AG04449 (cell line): ENCODE measurements at regions of chr11 and their contacts with region 1.

Region 1: DNA sequence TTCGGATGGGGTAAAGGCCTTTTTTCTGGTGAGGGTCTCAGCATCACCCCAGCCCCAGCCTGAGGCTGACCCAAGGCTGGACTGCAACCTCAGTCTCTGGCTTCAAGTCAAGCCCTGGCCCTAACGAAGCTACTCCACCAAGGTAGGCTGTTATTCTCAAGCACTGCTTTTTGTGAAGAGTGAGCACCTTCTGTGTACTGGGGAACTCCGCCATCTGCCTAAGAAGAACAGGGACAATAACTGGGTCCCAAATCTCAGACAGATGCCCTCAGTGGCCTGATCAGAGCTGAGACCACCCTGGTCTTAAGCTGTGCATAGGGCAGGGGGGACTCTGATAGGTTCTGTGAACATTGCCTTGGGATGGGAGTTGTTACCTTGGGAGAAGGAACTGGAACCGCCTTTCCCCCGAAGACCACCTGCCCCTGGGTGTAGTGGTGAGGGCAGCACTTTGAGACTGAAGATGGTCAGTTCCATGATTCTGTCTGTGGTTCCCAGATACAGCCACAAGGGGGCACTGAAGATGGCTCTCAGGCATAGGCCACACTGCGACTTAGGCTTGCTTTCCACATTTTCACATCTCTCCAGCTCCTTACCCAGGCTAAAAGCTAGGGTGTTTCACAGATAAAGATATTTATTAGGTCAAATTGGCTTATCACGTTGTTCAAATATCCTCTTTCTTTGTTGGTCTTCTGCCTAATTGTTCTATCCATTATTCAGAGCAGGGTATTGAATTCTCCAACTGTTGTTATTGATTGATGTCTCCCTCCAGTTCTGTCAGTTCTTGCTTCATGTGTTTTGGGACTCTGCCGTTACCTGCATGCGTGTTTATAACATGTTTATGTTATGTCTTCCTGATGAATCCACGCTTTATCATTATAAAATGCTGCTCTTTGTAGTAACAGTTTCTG is 11.8 kb upstream of the UVRAG start:
- DNase-seq: no peak
- H3K4me3 ChIP-seq: no peak overlapping the region
- CTCF ChIP-seq: peak; percentile 93

Region 2: DNA sequence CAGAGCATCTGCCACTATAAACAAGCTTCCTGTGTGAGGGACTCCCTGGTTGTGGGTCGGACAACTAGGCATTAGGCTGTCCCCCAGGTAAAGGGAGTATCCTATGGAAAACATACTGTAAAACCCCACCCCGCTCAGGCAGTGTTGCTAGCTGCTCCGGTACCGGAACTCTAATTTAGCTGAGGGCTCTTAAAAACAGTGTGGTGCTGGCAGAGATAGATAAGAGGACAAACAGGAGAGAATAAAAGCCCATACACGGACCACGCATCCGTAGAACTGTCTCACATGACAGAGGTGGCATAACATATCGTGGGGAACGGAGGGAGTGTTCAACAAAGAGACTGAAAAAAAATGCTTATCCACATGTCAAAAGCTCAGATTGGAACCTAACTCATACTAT is 89.0 kb before region 1 on chr11:
- CTCF ChIA-PET with region 1: no interaction called
- POLR2A ChIA-PET with region 1: no interaction called
- DNase-seq: no peak
- H3K4me3 ChIP-seq: no peak overlapping the region
- CTCF ChIP-seq: no peak

Region 3: GRCh38 chr11:75786101-75786736 is 16.9 kb before region 1 on chr11:
- CTCF ChIA-PET with region 1: interaction called, 76 read pairs
- POLR2A ChIA-PET with region 1: no interaction called
- DNase-seq: no peak
- H3K4me3 ChIP-seq: no peak overlapping the region
- CTCF ChIP-seq: no peak

Region 4: GRCh38 chr11:75823415-75824345 is 20.5 kb after region 1 on chr11:
- CTCF ChIA-PET with region 1: interaction called, 14 read pairs
- POLR2A ChIA-PET with region 1: interaction called, 4 read pairs
- DNase-seq: no peak
- H3K4me3 ChIP-seq: no peak overlapping the region
- CTCF ChIP-seq: no peak

Region 5: GRCh38 chr11:75867775-75868374 is 64.7 kb after region 1 on chr11:
- CTCF ChIA-PET with region 1: interaction called, 181 read pairs
- POLR2A ChIA-PET with region 1: no interaction called
- DNase-seq: no peak
- H3K4me3 ChIP-seq: no peak overlapping the region
- CTCF ChIP-seq: peak; percentile 41

Region 6: GRCh38 chr11:75919525-75919924 is 116.4 kb after region 1 on chr11:
- CTCF ChIA-PET with region 1: no interaction called
- POLR2A ChIA-PET with region 1: no interaction called
- DNase-seq: no peak
- H3K4me3 ChIP-seq: no peak overlapping the region
- CTCF ChIP-seq: no peak

Region 7: GRCh38 chr11:76152086-76152681 is 349.0 kb after region 1 on chr11:
- CTCF ChIA-PET with region 1: interaction called, 13 read pairs
- POLR2A ChIA-PET with region 1: no interaction called
- DNase-seq: no peak
- H3K4me3 ChIP-seq: peak overlapping the region; percentile 6; the same call in 1 of the 2 replicates
- CTCF ChIP-seq: peak; percentile 97